OCI-LY7 (cell line): ENCODE measurements at regions of chr22 and their contacts with region 1.

Region 1: GRCh38 chr22:50030297-50031188 is 18.0 kb upstream of the IL17REL start:
- DNase-seq: peak; percentile 86
- H3K4me3 ChIP-seq: no peak overlapping the region
- H3K27ac ChIP-seq: no peak overlapping the region
- H3K4me1 ChIP-seq: peaks cover 7% of the 10 kb centered on the region
- CTCF ChIP-seq: peak; percentile 91

Region 2: GRCh38 chr22:49767355-49768062 is 263.0 kb before region 1 on chr22:
- CTCF ChIA-PET with region 1: no interaction called
- POLR2A ChIA-PET with region 1: no interaction called
- intact Hi-C with region 1: loop called (anchors 2 kb)
- DNase-seq: peak; percentile 72
- H3K4me3 ChIP-seq: no peak overlapping the region
- H3K27ac ChIP-seq: no peak overlapping the region
- H3K4me1 ChIP-seq: no peaks in the 10 kb centered on the region
- CTCF ChIP-seq: peak; percentile 98

Region 3: DNA sequence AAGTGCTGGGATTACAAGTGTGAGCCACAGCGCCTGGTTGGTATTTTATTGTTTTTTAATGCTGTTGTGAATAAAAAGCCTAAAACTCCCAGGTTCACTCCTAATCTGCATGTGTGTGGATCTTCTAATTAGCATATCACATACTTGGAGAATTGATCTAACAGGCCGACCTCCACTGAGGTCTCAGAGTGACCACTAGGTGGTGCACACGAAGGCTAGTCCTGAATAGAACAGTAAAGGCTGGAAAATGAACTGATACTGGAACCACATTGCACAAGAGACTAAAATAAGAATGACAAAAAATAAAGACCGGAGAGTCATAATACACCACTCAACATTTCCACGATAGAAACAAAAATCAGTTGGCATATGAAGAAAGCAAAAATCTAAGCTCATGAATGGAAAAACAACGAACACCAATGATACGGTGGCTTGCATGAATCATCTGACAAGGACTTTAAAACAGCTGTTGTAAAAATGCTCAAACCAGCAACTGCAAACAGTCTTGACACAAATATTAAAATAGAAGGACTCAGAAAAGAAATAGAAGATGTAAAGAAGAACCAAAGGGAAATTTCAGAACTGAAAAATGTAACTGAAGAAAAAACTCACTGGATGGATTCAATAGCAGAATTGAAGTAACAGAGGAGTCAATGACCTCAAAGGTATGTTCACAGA is 50.8 kb before region 1 on chr22:
- CTCF ChIA-PET with region 1: no interaction called
- POLR2A ChIA-PET with region 1: no interaction called
- intact Hi-C with region 1: loop called (anchors 5 kb)
- DNase-seq: peak; percentile 62
- H3K4me3 ChIP-seq: no peak overlapping the region
- H3K27ac ChIP-seq: no peak overlapping the region
- H3K4me1 ChIP-seq: peaks cover 17% of the 10 kb centered on the region
- CTCF ChIP-seq: peak; percentile 84

Region 4: DNA sequence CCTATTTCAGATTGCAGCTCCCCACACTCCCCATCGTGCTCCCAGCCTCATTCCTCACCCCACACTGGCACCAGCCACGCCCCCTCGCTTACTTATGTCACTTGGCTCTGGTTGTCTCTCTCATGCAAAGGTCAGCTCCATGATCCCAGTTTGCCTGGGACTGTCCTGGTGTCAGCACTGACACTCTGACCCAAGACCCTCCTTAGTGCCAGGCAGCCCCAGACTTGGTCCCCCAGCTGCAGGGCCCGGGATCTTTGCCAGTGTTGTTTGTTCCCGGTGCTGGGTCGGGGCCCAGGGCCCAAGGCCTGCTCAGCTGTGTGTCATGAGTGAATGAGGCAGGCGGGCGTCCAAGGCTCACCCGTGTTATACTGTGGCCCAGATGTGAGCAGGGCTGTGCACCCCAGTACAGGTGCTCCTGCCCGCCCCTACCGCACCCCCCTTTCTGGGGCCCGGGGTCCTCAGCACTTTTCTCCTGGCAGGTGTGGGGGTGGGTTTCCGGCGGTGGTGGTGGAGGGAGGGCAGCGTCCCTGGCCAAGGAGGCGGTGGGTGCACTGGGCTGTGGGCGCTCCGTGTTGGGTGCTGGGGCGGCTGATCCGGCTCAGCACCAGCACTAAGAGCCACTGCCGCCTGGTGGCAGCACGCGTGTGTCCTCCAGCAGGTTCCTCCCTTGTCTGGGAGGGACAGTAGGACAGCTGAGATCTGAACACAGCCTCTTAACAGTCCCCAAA is 37.5 kb before region 1 on chr22:
- CTCF ChIA-PET with region 1: no interaction called
- POLR2A ChIA-PET with region 1: no interaction called
- intact Hi-C with region 1: loop called (anchors 5 kb)
- DNase-seq: peak; percentile 74
- H3K4me3 ChIP-seq: no peak overlapping the region
- H3K27ac ChIP-seq: no peak overlapping the region
- H3K4me1 ChIP-seq: peaks cover 10% of the 10 kb centered on the region
- CTCF ChIP-seq: peak; percentile 80

Region 5: GRCh38 chr22:50118557-50119168 is 88.1 kb after region 1 on chr22:
- CTCF ChIA-PET with region 1: no interaction called
- POLR2A ChIA-PET with region 1: no interaction called
- intact Hi-C with region 1: no loop called
- DNase-seq: no peak
- H3K4me3 ChIP-seq: no peak overlapping the region
- H3K27ac ChIP-seq: no peak overlapping the region
- H3K4me1 ChIP-seq: peaks cover 10% of the 10 kb centered on the region
- CTCF ChIP-seq: no peak